ENCODE measurements at regions of chr9 and their contacts with region 1.

Region 1: DNA sequence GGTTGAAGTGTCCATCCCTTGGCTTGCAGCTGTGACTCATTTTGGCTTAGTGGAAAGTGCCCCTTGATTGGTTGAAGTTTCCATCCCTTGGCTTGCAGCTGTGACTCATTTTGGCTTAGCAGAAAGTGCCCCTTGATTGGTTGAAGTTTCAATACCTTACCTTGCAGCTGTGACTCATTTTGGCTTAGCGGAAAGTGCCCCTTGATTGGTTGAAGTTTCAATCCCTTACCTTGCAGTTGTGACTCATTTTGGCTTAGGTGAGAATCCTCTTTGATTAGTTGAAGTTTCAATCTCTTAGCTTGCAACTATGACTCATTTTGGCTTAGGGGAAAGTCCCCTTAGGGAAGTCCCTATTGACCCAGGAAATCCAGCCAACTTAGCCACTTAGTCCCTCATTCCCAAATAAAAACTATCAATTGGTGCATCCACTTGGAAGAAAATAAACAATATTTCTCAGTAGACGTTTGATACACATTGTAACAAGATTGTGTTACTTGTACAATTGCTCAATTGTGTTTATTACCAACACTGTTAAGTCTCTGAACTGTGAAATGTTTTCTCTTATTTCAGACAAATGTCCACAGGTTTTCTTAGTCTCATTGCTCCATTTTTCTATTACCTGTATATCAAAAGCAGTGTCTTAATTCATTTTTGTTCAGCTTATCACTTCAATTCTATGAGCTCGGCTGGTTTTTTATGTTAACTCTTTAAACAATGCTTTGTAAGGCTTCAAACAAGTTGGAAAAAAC is 2308.8 kb upstream of the ACO1 start:
- DNase-seq: peak; percentile 69
- H3K4me3 Mint-ChIP-seq: no peak overlapping the region
- H3K27ac Mint-ChIP-seq: peak overlapping the region; percentile 52
- H3K4me1 Mint-ChIP-seq: peaks cover 18% of the 10 kb centered on the region
- H3K27me3 Mint-ChIP-seq: no peaks in the 10 kb centered on the region

Region 2: GRCh38 chr9:29866556-29866955 is 209.1 kb before region 1 on chr9:
- intact Hi-C with region 1: loop called (anchors 2 kb)
- DNase-seq: no peak
- H3K4me3 Mint-ChIP-seq: no peak overlapping the region
- H3K27ac Mint-ChIP-seq: no peak overlapping the region
- H3K4me1 Mint-ChIP-seq: no peaks in the 10 kb centered on the region
- H3K27me3 Mint-ChIP-seq: no peaks in the 10 kb centered on the region

Region 3: DNA sequence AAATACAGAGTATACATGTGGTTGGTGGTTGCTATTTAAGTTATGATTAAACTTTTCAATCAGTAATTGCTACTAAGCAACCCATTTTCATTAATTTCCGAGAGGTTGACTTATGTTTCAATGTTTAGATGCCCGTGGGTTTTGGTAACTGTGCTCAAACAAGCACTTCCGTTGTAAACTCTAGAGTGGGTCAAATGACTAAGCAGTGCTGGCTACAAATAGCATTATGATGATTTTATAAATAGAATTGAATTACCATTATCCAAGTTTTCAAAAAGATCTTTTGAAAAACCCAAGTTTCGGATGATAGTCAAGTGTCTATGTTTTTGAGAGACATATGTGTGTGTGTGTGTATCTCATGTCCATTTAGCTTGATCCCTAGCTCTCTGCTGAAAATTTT is 60.6 kb before region 1 on chr9:
- intact Hi-C with region 1: loop called (anchors 10 kb)
- DNase-seq: no peak
- H3K4me3 Mint-ChIP-seq: no peak overlapping the region
- H3K27ac Mint-ChIP-seq: no peak overlapping the region
- H3K4me1 Mint-ChIP-seq: no peaks in the 10 kb centered on the region
- H3K27me3 Mint-ChIP-seq: no peaks in the 10 kb centered on the region